ENCODE measurements at regions of chr6 and their contacts with region 1.

Region 1: GRCh38 chr6:134436281-134436815 is 118.4 kb upstream of the SGK1 start:
- DNase-seq: peak; percentile 74
- H3K4me3 Mint-ChIP-seq: peak overlapping the region; percentile 55
- H3K27ac Mint-ChIP-seq: peak overlapping the region; percentile 99
- H3K4me1 Mint-ChIP-seq: peaks cover 41% of the 10 kb centered on the region
- H3K27me3 Mint-ChIP-seq: no peaks in the 10 kb centered on the region

Region 2: DNA sequence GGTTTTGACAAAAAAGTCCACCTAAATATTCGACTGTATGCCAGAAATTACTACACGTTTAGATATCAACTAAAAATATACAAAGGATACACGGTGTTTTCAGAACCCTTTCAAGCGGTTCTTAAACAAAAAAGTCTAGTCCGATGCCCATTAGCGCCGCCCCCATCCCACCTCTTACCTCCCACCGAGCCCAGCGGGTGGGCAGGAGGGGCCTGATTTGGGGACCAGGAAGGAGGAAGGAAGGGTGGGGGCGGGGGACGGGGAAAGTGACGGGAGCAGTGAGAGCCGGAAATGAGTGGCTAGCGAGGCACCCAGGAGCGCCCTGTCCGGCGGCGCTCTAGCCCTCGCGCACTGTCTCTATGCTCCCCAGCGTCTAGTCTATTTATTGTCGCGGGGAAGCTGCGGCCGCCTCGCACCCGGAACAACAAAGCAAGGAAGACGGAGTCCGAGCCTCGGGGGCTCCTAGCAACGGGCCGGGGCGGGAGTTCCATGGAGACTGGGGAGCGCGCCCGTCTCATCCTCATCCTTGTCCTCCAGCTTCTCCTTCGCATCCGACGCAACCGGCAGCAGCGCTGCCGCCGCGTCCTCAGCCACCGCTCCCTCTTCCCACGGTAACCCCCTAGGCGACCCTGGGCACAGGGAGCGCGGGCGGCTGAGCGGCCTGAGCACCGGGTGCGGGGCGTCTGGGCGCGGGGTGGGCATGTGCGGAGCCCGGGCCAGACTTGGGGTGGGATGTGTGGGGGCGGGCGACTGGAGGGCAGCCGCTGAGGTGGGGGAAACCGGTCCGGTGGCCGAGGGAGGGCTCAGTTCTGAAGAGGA is 483.3 kb before region 1 on chr6 and contains the start of gene TBPL1:
- intact Hi-C with region 1: loop called (anchors 10 kb)
- DNase-seq: peak; percentile 76
- H3K4me3 Mint-ChIP-seq: peak within 1 kb of the TSS; percentile 95
- H3K27ac Mint-ChIP-seq: peak within 1 kb of the TSS; percentile 90
- H3K4me1 Mint-ChIP-seq: peaks cover 48% of the 10 kb centered on the region
- H3K27me3 Mint-ChIP-seq: peaks cover 10% of the 10 kb centered on the region
- total RNA-seq, gene TBPL1: 40.5 and 42.2 TPM in 2 replicates

Region 3: GRCh38 chr6:134247231-134247833 is 189.0 kb before region 1 on chr6:
- intact Hi-C with region 1: loop called (anchors 1 kb)
- DNase-seq: peak; percentile 82
- H3K4me3 Mint-ChIP-seq: peak overlapping the region; percentile 37
- H3K27ac Mint-ChIP-seq: peak overlapping the region; percentile 91
- H3K4me1 Mint-ChIP-seq: peaks cover 58% of the 10 kb centered on the region
- H3K27me3 Mint-ChIP-seq: no peaks in the 10 kb centered on the region

Region 4: GRCh38 chr6:134379086-134379485 is 57.3 kb before region 1 on chr6:
- intact Hi-C with region 1: loop called (anchors 1 kb)
- DNase-seq: peak; percentile 49
- H3K4me3 Mint-ChIP-seq: peak overlapping the region; percentile 38
- H3K27ac Mint-ChIP-seq: peak overlapping the region; percentile 82
- H3K4me1 Mint-ChIP-seq: peaks cover 47% of the 10 kb centered on the region
- H3K27me3 Mint-ChIP-seq: no peaks in the 10 kb centered on the region

Region 5: GRCh38 chr6:134424165-134424790 is 12.1 kb before region 1 on chr6:
- intact Hi-C with region 1: loop called (anchors 1 kb)
- DNase-seq: no peak
- H3K4me3 Mint-ChIP-seq: no peak overlapping the region
- H3K27ac Mint-ChIP-seq: no peak overlapping the region
- H3K4me1 Mint-ChIP-seq: peaks cover 36% of the 10 kb centered on the region
- H3K27me3 Mint-ChIP-seq: no peaks in the 10 kb centered on the region

Region 6: GRCh38 chr6:134640975-134641429 is 204.7 kb after region 1 on chr6:
- intact Hi-C with region 1: loop called (anchors 1 kb)
- DNase-seq: peak; percentile 65
- H3K4me3 Mint-ChIP-seq: no peak overlapping the region
- H3K27ac Mint-ChIP-seq: no peak overlapping the region
- H3K4me1 Mint-ChIP-seq: peaks cover 33% of the 10 kb centered on the region
- H3K27me3 Mint-ChIP-seq: no peaks in the 10 kb centered on the region

Region 7: GRCh38 chr6:135114355-135115145 is 678.2 kb after region 1 on chr6:
- intact Hi-C with region 1: loop called (anchors 2 kb)
- DNase-seq: peak; percentile 53
- H3K4me3 Mint-ChIP-seq: peak overlapping the region; percentile 66
- H3K27ac Mint-ChIP-seq: peak overlapping the region; percentile 97
- H3K4me1 Mint-ChIP-seq: peaks cover 88% of the 10 kb centered on the region
- H3K27me3 Mint-ChIP-seq: no peaks in the 10 kb centered on the region